Activated T-helper 2 cell treated with anti-CD3 and anti-CD28 coated beads, Interferon-gamma antibody, Interleukin-2, Interleukin-4, amounts not matched to agents 10 μg/mL and 5 μg/mL and 100 μg/mL, durations not matched to agents 14 hours and 24 hours and 36 hours (primary cell): ENCODE measurements at regions of chr7 and their contacts with region 1.

Region 1: DNA sequence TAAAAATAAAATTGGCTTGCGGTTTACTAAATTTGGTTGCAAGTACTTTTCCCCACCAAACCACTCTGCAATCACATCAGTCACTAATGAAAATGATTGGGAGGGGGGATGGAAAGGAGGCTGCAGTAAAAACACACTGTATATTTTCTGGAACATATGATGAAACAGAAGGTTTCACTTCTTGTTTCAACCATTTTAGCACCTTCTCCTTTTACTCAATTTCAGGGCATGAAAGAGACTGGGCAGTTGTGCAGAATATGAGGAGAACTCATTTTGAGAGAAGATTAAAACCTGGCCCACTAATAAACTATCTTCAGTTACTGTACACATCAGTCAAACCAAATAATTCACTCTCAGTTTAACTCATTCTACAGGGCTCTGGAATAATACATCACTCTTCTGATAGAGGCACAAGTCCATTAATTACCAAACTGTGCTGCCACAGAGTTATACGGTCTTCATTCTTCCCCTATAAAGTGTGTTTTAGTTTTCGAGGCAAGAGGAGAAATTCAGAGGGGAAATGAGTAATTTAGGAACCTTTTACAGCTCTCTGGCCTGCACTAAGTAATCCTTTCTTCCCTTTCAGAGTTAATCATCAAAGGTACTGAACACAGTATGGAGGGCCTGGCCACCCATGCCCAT is 25.5 kb downstream of the JAZF1 start:
- DNase-seq: no peak
- H3K4me3 Mint-ChIP-seq: no peak overlapping the region
- H3K27ac Mint-ChIP-seq: peak overlapping the region; percentile 60
- H3K4me1 Mint-ChIP-seq: peaks cover 47% of the 10 kb centered on the region
- H3K27me3 Mint-ChIP-seq: peaks cover 26% of the 10 kb centered on the region

Region 2: DNA sequence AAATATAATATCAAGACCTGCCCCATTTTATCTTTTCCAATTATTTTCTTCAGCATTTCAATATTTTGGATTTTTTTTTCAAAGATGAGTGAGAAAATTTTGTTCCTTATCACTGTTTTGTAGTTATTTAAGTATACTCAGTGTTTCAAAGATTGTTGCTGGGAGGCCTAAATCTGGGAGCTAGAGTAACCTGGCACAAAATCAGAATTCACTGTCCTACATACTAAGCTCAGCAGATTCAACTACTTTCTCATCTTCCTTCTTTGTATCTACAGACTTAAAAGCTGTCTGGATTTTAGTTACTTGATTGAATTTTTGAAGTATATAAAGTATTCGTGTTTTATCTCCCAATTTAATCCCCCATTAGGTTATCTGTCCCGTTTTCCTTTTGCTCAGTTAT is 329.2 kb before region 1 on chr7:
- intact Hi-C with region 1: no loop called
- DNase-seq: no peak
- H3K4me3 Mint-ChIP-seq: no peak overlapping the region
- H3K27ac Mint-ChIP-seq: no peak overlapping the region
- H3K4me1 Mint-ChIP-seq: no peaks in the 10 kb centered on the region
- H3K27me3 Mint-ChIP-seq: no peaks in the 10 kb centered on the region

Region 3: GRCh38 chr7:28179120-28180030 is 24.2 kb after region 1 on chr7:
- intact Hi-C with region 1: loop called (anchors 1 kb)
- DNase-seq: peak; percentile 62
- H3K4me3 Mint-ChIP-seq: peak overlapping the region; percentile 65
- H3K27ac Mint-ChIP-seq: peak overlapping the region; percentile 22
- H3K4me1 Mint-ChIP-seq: peaks cover 18% of the 10 kb centered on the region
- H3K27me3 Mint-ChIP-seq: peaks cover 55% of the 10 kb centered on the region

Region 4: GRCh38 chr7:28292834-28293526 is 137.8 kb after region 1 on chr7:
- intact Hi-C with region 1: loop called (anchors 1 kb)
- DNase-seq: no peak
- H3K4me3 Mint-ChIP-seq: no peak overlapping the region
- H3K27ac Mint-ChIP-seq: no peak overlapping the region
- H3K4me1 Mint-ChIP-seq: peaks cover 10% of the 10 kb centered on the region
- H3K27me3 Mint-ChIP-seq: peaks cover 46% of the 10 kb centered on the region

Region 5: DNA sequence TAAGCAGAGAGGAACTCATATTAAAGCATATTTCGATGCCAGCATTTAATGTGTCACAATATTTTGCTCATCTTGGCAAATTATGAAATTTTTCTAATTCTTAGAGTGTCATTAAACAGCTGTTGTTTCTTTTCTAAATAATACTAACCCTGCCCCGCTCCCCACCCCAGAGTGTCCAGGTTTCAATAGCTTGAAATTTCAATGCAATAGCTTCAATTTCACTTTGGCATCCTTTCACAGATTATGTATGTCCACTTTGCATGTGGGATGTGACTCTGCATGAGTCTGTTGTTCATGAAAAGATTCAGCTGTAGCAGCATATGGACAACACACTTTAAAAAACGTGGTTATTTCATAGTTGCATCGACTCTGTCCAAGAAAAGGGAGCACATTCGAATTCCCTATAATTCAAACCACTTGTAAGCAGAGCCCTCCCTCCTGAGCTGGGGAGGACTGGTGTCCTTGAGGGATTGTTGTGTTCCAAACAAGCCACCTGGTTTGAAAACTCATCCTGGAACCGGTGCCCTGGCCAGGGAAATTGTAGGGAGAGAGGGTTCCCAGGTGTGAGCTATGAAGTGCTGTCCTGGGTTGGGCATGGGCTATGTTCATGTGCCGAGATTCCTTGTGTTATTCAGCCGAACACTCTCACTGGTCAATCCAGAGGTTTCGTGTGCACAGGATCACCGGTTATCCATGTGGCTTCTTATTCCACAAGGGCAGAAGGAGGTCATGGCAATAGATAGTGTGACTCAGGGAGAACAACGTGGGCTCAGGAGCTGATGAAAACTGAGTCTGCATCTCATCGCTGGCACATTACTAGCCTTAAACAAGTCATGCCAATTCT is 192.6 kb after region 1 on chr7:
- intact Hi-C with region 1: no loop called
- DNase-seq: no peak
- H3K4me3 Mint-ChIP-seq: no peak overlapping the region
- H3K27ac Mint-ChIP-seq: no peak overlapping the region
- H3K4me1 Mint-ChIP-seq: no peaks in the 10 kb centered on the region
- H3K27me3 Mint-ChIP-seq: peaks cover 27% of the 10 kb centered on the region

Region 6: DNA sequence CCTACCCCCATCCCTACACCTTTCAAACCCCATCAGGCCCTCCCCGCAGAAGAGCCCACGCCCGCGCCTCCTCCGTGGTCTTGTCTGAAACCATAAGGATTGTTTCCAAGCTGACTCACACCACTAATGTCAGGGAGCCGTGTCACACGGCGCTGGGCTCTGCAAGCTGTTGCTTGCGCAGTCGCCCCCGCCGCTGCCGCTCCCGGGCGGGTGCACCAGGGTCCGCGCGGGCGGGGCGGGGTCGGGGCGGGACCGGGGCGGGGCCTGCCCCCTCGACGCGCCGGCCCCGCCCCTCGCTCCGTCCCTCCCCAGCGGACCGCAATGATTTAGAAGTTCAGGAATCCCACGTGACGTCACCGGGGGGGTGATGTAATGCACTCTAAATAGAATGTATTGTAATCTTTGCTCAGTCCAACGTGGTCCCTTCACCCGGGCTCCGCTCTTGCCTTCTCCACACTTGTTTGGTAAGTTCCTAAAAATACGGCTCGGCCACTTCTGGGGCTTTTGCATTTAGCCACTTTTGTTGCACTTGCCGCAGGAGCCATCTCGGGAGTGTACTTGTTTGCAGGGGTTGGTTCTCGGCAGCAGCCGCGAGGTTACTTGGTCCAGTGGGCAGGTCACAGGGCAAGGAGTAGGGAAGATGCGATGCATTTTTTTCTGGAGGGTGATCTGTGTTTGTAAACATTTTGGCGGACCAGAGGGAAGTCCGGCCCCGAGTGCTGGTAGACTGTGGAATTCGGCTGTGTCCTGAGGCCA is 254.0 kb after region 1 on chr7:
- intact Hi-C with region 1: loop called (anchors 1 kb)
- DNase-seq: peak; percentile 37
- H3K4me3 Mint-ChIP-seq: peak overlapping the region; percentile 77
- H3K27ac Mint-ChIP-seq: peak overlapping the region; percentile 48
- H3K4me1 Mint-ChIP-seq: peaks cover 27% of the 10 kb centered on the region
- H3K27me3 Mint-ChIP-seq: peaks cover 57% of the 10 kb centered on the region